PC-3 (cell line): ENCODE measurements at regions of chr2 and their contacts with region 1.

Region 1: GRCh38 chr2:147696448-147696847 is 148.4 kb upstream of the ACVR2A start:
- DNase-seq: peak; percentile 80
- ATAC-seq: peak; percentile 90
- H3K4me3 ChIP-seq: 0 out of 2 replicates have a peak overlapping the region, but pooled peaks have one; percentile 2
- H3K27ac ChIP-seq: peak overlapping the region; percentile 74
- H3K4me1 ChIP-seq: peaks cover 20% of the 10 kb centered on the region
- H3K27me3 ChIP-seq: no peaks in the 10 kb centered on the region
- CTCF ChIP-seq: no peak

Region 2: GRCh38 chr2:147161746-147162145 is 534.7 kb before region 1 on chr2:
- CTCF ChIA-PET with region 1: no interaction called
- POLR2A ChIA-PET with region 1: no interaction called
- intact Hi-C with region 1: no loop called
- DNase-seq: no peak
- ATAC-seq: no peak
- H3K4me3 ChIP-seq: no peak overlapping the region
- H3K27ac ChIP-seq: no peak overlapping the region
- H3K4me1 ChIP-seq: no peaks in the 10 kb centered on the region
- H3K27me3 ChIP-seq: no peaks in the 10 kb centered on the region
- CTCF ChIP-seq: no peak

Region 3: GRCh38 chr2:147648471-147648870 is 48.0 kb before region 1 on chr2:
- CTCF ChIA-PET with region 1: no interaction called
- POLR2A ChIA-PET with region 1: no interaction called
- intact Hi-C with region 1: loop called (anchors 1 kb)
- DNase-seq: peak; percentile 62
- ATAC-seq: peak; percentile 54
- H3K4me3 ChIP-seq: no peak overlapping the region
- H3K27ac ChIP-seq: peak overlapping the region; percentile 21; the same call in 1 of the 2 replicates
- H3K4me1 ChIP-seq: peaks cover 31% of the 10 kb centered on the region
- H3K27me3 ChIP-seq: no peaks in the 10 kb centered on the region
- CTCF ChIP-seq: no peak

Region 4: DNA sequence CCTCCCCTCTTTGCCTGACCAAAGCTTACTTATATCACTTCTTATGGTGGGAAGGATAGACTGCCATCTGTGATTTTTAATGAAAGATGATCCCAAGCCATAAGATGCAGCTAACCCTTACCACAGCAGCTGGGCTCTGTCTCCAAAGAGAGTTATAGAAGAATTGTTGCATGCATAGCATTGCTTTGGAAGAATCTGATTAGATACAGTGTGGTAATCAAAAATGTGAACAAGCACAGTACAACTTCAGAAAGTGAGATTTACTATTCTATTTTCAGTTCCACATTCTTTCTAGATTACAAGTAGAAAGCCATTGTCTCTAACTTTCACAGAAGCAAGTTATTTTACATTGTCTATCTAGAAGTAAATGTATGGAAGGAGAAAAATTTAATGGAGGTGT is 19.4 kb after region 1 on chr2:
- CTCF ChIA-PET with region 1: no interaction called
- POLR2A ChIA-PET with region 1: no interaction called
- intact Hi-C with region 1: loop called (anchors 2 kb)
- DNase-seq: no peak
- ATAC-seq: no peak
- H3K4me3 ChIP-seq: no peak overlapping the region
- H3K27ac ChIP-seq: no peak overlapping the region
- H3K4me1 ChIP-seq: peaks cover 21% of the 10 kb centered on the region
- H3K27me3 ChIP-seq: no peaks in the 10 kb centered on the region
- CTCF ChIP-seq: no peak